HepG2 (cell line): ENCODE measurements at regions of chr20 and their contacts with region 1.

Region 1: DNA sequence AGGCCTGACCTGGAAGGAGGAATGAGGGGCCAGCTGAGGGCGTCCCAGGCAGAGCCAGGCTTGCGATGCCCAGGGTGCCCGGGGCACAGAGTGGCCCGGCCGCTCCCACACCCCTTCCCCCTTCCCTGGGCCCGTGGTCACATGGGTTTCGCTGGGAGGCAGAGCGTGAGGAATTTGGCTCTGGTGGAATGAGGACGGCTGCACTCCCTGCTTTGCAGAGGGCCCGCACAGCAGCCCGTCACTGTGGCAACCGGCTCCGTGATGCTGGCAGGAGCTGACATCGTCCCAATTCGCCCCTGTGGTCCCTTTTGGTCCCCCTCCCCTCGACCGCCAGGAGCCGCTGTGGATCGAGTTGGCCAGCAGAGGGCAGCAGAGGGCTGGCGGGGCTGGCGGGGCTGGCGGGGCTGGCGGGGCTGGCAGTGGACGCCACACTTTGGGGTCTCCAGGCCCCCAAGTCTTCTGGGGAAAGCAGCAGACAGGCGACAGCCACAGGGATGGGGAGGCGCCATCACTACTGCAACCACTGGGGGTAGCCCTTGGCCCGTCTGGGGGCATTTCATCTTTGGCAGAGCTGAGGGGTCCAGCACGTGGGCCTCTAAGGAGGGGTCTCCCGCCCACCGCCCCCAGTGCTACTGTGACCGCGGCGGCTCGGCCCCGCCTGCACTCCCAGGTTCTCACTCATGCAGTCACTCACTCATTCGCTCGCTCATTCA is 49.6 kb upstream of the BHLHE23 start:
- DNase-seq: no peak
- ATAC-seq: peak; percentile 65
- H3K4me3 ChIP-seq: no peak overlapping the region
- H3K27ac ChIP-seq: no peak overlapping the region
- H3K4me1 ChIP-seq: peaks cover 9% of the 10 kb centered on the region
- H3K27me3 ChIP-seq: peaks cover 25 to 77% of the 10 kb centered on the region in 2 experiments
- CTCF ChIP-seq: peak; percentile 96
- EP300 ChIP-seq: no peak
- POLR2A ChIP-seq: no peak
- RAD21 ChIP-seq: peak; percentile 91

Region 2: DNA sequence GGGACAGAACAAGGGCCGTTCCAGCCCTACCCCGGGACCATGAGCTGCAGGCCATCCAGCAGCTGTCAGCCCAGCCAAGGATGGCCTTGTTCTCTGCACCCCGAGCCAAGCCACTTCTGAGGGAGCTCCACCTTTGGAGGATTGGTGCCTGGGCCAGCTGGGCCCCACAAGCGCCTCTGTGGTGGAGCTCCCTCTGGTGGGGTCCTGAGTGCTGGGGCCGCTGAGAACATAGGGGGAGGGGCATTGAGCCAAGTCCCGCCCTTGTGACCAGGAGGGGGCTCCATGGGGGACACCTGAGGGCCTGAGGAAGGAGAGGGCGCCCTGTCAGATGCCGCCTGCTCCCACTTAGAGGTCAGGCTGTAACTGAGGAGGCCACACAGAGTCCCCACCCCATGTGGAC is 116.3 kb after region 1 on chr20:
- CTCF ChIA-PET with region 1: interaction called, 6 read pairs
- POLR2A ChIA-PET with region 1: no interaction called
- in situ Hi-C with region 1: no loop called
- intact Hi-C with region 1: loop called (anchors 1 kb)
- DNase-seq: peak; percentile 52
- ATAC-seq: peak; percentile 46
- H3K4me3 ChIP-seq: no peak overlapping the region
- H3K27ac ChIP-seq: no peak overlapping the region
- H3K4me1 ChIP-seq: peaks cover 21% of the 10 kb centered on the region
- H3K27me3 ChIP-seq: peaks cover 21 to 97% of the 10 kb centered on the region in 2 experiments
- CTCF ChIP-seq: peak; percentile 77
- EP300 ChIP-seq: no peak
- POLR2A ChIP-seq: no peak
- RAD21 ChIP-seq: peak; percentile 77

Region 3: DNA sequence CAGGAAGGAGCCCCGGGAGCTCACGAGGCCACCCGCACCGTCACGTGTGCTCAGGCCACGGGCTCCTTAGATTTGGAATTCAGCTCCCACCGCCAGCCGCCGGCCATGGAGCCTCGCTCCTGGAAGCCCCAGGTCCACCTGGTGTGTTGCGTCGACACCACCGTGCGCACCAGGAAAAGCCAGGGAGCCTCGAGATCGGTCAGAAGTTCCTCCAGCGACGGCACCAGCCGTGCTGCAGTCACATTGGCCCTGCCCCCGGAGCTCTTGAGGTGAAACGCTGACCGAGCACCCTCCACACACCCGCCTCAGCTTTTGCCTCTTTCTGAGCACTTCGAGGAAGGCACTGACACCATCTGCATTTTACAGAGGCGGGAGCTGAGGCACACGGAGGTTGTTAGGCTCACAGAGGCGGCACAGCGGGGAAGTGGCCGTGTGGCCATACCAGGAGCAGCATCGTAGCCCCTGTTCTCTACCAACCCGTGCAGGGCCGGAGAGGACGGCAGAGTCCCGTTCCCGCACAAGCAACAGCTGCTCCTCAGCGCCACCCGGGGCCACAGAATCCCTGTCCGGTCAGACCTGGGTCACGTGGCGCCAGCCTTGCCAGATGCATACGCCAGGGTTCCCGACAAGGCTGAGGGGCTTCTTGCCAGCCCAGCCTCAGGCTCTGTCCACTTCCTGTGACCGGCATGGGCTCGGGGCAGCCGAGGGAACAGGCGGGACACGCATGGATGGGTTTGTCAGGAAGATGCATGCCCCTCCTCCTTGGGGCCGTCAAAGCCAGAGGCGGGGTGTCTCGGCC is 190.3 kb after region 1 on chr20:
- CTCF ChIA-PET with region 1: no interaction called
- POLR2A ChIA-PET with region 1: no interaction called
- in situ Hi-C with region 1: no loop called
- intact Hi-C with region 1: loop called (anchors 10 kb)
- DNase-seq: no peak
- ATAC-seq: peak; percentile 6; the same call in 2 of the 3 replicates
- H3K4me3 ChIP-seq: no peak overlapping the region
- H3K27ac ChIP-seq: no peak overlapping the region
- H3K4me1 ChIP-seq: peaks cover 2% of the 10 kb centered on the region
- H3K27me3 ChIP-seq: peaks cover 20 to 82% of the 10 kb centered on the region in 2 experiments
- CTCF ChIP-seq: 0 out of 2 replicates have a peak, but pooled peaks have one; percentile 13
- EP300 ChIP-seq: no peak
- POLR2A ChIP-seq: no peak
- RAD21 ChIP-seq: no peak